K562 (cell line): ENCODE measurements at regions of chr10 and their contacts with region 1.

Region 1: GRCh38 chr10:101301249-101301711 is 52.7 kb upstream of the BTRC start:
- DNase-seq: peak; percentile 50 to 68 (median 56)
- ATAC-seq: peak; percentile 94
- H3K4me3 ChIP-seq: no peak overlapping the region
- H3K27ac ChIP-seq: no peak overlapping the region
- H3K4me1 ChIP-seq: no peaks in the 10 kb centered on the region
- H3K27me3 ChIP-seq: peaks cover 6 to 37% of the 10 kb centered on the region in 2 experiments; a peak in 4 of 5 replicates
- CTCF ChIP-seq: peak; percentile 76 to 80 (median 76)
- EP300 ChIP-seq: no peak
- POLR2A ChIP-seq: no peak
- RAD21 ChIP-seq: peak; percentile 80 to 89

Region 2: DNA sequence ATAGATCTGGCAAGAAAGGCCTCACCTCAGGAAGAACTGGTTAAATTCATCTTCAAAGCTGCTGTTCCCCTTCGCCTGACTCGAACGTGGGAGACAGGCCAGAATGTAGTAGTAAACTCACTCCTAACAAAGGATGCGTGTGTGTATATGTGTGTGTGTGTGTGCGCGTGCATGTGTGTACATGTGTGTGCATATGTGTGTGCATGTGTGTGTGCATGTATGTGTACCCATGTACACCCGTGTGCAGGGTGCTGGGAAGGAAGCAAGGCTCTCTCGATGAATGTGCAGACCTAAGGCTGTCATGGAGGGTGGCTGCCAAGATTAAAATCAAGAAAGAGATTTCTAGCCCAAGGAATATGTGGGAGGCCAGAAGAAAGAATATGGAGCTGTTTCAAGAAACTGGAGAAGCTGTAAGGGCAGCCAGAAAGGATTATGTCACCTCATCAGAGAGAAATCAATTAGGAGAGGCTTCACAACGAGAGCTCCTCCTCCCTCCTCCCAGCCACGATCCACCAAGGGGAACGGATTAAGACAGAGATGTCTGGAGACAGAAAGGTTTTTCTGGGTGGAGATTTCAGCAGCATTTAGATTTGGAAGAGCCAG is 38.0 kb before region 1 on chr10:
- CTCF ChIA-PET with region 1: no interaction called
- POLR2A ChIA-PET with region 1: no interaction called
- in situ Hi-C with region 1: no loop called
- intact Hi-C with region 1: no loop called
- DNase-seq: no peak
- ATAC-seq: no peak
- H3K4me3 ChIP-seq: no peak overlapping the region
- H3K27ac ChIP-seq: no peak overlapping the region
- H3K4me1 ChIP-seq: peaks cover 8% of the 10 kb centered on the region in 2 experiments; a peak in 2 of 5 replicates
- H3K27me3 ChIP-seq: peaks cover 0 to 18% of the 10 kb centered on the region in 2 experiments; a peak in 2 of 5 replicates
- CTCF ChIP-seq: no peak
- EP300 ChIP-seq: no peak
- POLR2A ChIP-seq: no peak
- RAD21 ChIP-seq: no peak

Region 3: DNA sequence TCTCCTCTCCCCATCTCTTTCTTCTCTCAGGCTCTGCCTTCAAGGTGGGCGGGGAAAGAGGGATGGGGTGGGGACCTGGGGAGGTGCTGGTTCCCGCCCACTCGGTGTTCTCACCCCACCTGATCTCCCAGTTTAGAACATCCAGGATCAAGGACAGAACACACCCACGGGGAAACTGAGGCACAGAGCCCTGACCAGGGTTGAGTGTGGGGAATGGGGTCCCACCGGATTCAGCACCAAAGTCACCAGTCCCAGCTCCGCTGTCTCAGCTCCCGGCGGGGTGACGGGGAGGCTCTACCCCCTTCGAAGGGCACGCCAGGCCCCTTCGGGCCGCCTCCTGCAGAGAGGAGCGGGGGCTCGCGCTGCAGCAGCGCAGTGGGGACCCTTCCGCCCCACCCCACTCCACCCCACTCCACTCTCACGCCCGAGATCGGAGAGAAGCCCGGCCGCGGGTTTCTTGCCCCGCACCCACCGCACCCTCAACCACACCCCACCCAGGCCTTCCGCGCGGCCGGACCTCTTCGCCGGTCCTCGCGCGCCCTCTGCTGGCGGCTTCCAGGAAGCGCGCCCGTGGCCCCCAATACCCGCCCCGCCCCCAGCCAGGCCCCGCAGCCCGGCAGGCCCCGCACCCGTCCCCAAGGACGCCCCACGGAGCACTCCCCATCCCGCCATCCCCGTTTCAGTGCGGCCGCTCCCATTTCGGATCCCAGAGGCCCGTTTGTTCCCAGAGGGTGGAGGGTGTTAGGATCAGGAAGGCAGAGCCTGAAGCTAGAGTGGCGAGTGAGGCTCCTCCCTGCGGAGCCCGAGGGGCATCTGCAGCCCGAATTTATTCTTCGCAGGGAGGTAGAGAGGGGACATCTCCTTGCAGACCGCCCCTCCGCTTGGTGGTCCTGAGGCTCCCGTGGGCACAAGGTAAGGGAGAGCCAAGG is 268.8 kb after region 1 on chr10:
- CTCF ChIA-PET with region 1: interaction called, 3 read pairs
- POLR2A ChIA-PET with region 1: no interaction called
- in situ Hi-C with region 1: loop called (anchors 5 kb)
- intact Hi-C with region 1: loop called (anchors 1 kb)
- DNase-seq: peak; percentile 77 to 88 (median 86)
- ATAC-seq: peak; percentile 88
- H3K4me3 ChIP-seq: peak overlapping the region; percentile 54
- H3K27ac ChIP-seq: no peak overlapping the region; the same call in 2 of the 3 replicates
- H3K4me1 ChIP-seq: peaks cover 20 to 48% of the 10 kb centered on the region in 2 experiments
- H3K27me3 ChIP-seq: no peaks in the 10 kb centered on the region
- CTCF ChIP-seq: peak; percentile 34 to 78 (median 60); a peak in 5 of 6 replicates
- EP300 ChIP-seq: no peak
- POLR2A ChIP-seq: no peak
- RAD21 ChIP-seq: peak; percentile 64 to 69